IMR-90 (cell line): ENCODE measurements at regions of chr9 and their contacts with region 1.

Region 1: DNA sequence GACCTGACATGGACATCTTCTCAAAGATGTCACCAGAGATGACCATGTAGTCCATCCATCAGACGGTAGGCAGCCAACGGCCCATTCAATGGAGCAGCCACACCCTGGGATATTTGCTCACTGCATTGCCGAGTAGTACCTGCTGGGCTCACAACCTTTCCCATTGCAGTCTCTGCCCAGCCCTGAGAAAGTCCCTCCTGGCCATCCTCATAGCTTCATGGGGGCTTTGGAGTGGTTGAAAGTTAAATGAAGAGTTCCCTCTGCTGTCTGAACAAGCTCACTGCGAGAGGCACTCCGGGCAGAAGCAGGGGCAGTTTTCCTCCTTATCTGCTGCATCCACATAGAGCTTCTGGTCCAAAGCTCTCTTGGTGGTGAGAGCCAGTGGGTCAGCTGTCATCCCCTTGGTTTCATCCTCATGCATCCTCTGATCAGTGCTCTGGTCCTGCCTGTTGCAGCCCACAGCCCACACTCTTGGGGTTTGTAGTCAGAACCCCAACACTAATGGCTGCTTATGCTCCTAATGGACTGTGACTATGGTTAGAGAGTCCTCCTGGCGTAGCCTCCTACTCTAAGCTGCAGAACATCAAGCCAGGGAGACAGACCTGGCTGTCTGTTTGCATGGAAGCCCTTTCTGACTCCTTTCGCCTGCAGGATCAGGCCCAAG is 23.4 kb downstream of the TNFSF8 start:
- DNase-seq: peak; percentile 61
- ATAC-seq: peak; percentile 76
- H3K4me3 ChIP-seq: no peak overlapping the region
- H3K27ac ChIP-seq: no peak overlapping the region
- H3K4me1 ChIP-seq: peaks cover 20% of the 10 kb centered on the region
- H3K27me3 ChIP-seq: no peaks in the 10 kb centered on the region; the same call in 1 of the 2 replicates
- CTCF ChIP-seq: peak; percentile 87
- POLR2A ChIP-seq: no peak
- RAD21 ChIP-seq: peak; percentile 89

Region 2: DNA sequence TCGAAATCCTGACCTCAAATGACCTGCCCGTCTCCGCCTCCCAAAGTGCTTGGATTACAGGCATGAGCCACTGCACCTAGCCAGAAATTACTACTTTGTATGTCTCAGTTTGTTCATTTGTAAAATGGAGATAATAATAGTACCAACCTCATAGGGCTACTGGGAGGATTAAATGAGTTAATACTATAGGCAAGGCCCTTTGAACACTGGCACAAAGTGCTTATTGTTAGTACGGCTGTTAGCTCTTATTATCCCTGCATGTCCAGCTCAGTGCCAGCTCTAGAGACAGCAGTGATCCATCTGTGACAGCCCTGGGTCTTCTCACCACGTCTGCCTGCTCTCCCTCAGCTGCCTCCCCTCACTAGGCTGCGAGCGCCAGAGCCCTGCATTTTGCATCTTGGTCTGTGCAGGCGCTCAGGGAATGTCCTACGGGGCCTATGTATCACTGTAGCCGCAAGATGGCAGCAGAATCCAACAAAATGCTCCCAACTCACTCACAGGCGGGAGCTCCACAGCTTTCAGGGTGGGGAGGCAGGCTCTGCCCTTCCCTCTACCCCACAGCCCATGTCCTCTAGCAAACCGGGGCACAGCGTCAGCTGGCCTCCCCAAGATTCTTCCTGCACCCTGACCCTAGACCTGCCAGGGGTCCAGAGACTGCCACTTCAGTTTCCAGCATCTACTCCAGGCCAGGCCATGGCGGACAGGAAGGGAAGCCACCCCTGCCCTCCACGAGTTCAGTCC is 501.6 kb before region 1 on chr9:
- CTCF ChIA-PET with region 1: interaction called, 4 read pairs
- POLR2A ChIA-PET with region 1: no interaction called
- dilution Hi-C with region 1: no loop called
- in situ Hi-C with region 1: loop called (anchors 10 kb)
- intact Hi-C with region 1: loop called (anchors 10 kb)
- DNase-seq: peak; percentile 78
- ATAC-seq: peak; percentile 99
- H3K4me3 ChIP-seq: no peak overlapping the region
- H3K27ac ChIP-seq: no peak overlapping the region
- H3K4me1 ChIP-seq: no peaks in the 10 kb centered on the region
- H3K27me3 ChIP-seq: peaks cover 5% of the 10 kb centered on the region; the same call in 1 of the 2 replicates
- CTCF ChIP-seq: peak; percentile 93
- POLR2A ChIP-seq: no peak
- RAD21 ChIP-seq: peak; percentile 95

Region 3: DNA sequence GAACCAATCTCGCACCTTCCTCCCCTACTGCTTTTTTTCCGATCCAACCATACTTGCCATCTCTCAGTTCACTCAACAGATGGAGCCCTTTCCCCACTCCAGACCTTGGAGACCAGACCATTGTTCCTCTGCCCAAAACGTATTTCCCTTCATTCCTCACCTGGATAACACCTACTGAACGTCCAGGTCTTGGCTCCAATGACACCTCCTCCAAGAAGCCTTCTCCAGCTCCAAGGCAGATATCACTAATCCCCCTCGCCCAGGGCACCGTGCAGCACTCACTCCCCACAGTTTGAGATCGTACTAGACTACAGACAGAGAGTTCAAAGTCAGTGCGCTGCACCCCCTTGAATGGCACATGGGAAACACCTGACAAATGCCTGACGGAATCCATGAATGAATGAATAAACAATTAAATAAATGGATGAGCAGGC is 472.1 kb before region 1 on chr9:
- CTCF ChIA-PET with region 1: no interaction called
- POLR2A ChIA-PET with region 1: no interaction called
- dilution Hi-C with region 1: no loop called
- in situ Hi-C with region 1: no loop called
- intact Hi-C with region 1: loop called (anchors 10 kb)
- DNase-seq: peak; percentile 37
- ATAC-seq: peak; percentile 91
- H3K4me3 ChIP-seq: no peak overlapping the region
- H3K27ac ChIP-seq: no peak overlapping the region
- H3K4me1 ChIP-seq: no peaks in the 10 kb centered on the region
- H3K27me3 ChIP-seq: peaks cover 13% of the 10 kb centered on the region
- CTCF ChIP-seq: peak; percentile 69
- POLR2A ChIP-seq: no peak
- RAD21 ChIP-seq: peak; percentile 79

Region 4: GRCh38 chr9:114662081-114662989 is 244.7 kb before region 1 on chr9:
- CTCF ChIA-PET with region 1: interaction called, 5 read pairs
- POLR2A ChIA-PET with region 1: no interaction called
- dilution Hi-C with region 1: no loop called
- in situ Hi-C with region 1: no loop called
- intact Hi-C with region 1: loop called (anchors 2 kb)
- DNase-seq: peak; percentile 33
- ATAC-seq: peak; percentile 98
- H3K4me3 ChIP-seq: no peak overlapping the region
- H3K27ac ChIP-seq: no peak overlapping the region
- H3K4me1 ChIP-seq: no peaks in the 10 kb centered on the region
- H3K27me3 ChIP-seq: peaks cover 30% of the 10 kb centered on the region
- CTCF ChIP-seq: peak; percentile 84
- POLR2A ChIP-seq: no peak
- RAD21 ChIP-seq: peak; percentile 92

Region 5: DNA sequence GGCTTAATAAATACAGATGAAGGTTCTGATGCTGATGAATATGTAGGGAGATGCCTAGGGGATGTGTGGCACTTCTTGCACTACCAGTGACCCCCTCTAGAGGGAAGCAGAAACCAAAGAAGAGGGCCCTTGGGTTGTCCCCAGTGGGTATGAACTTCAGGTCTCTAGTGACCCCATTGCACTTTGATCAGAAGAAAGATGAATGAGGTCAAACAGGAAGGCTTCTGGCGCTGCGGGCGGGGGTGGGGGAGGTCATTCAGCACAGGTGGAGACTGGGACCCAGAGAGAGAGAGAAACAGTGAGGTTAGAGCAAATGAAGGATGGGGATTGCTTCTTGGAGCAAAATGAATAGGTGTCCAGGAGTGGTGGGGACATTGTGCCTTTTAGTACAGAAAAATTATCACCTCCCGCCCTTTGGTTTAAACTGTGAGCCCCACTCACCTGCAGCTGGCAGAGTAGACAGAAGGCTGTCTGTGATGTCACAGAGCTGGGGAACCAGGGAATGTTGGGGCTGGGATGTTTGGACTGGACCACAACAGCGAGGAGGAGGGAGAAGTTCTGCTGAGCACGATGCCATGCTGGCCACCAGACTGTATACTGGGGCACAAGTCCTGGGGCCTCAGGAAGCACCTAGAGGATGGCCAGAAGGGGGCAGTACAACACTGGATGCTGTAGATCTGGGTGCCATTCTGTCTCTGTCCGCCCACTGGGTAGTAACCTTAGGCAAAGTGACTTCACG is 225.3 kb before region 1 on chr9 and contains the start of gene TEX48:
- CTCF ChIA-PET with region 1: interaction called, 19 read pairs
- POLR2A ChIA-PET with region 1: no interaction called
- dilution Hi-C with region 1: no loop called
- in situ Hi-C with region 1: loop called (anchors 5 kb)
- intact Hi-C with region 1: loop called (anchors 1 kb)
- DNase-seq: peak; percentile 74
- ATAC-seq: peak; percentile 58
- H3K4me3 ChIP-seq: no peak within 1 kb of the TSS
- H3K27ac ChIP-seq: no peak within 1 kb of the TSS
- H3K4me1 ChIP-seq: peaks cover 9% of the 10 kb centered on the region
- H3K27me3 ChIP-seq: no peaks in the 10 kb centered on the region
- CTCF ChIP-seq: peak; percentile 70
- POLR2A ChIP-seq: no peak
- RAD21 ChIP-seq: peak; percentile 75
- total RNA-seq, gene TEX48: not detected in 2 replicates

Region 6: DNA sequence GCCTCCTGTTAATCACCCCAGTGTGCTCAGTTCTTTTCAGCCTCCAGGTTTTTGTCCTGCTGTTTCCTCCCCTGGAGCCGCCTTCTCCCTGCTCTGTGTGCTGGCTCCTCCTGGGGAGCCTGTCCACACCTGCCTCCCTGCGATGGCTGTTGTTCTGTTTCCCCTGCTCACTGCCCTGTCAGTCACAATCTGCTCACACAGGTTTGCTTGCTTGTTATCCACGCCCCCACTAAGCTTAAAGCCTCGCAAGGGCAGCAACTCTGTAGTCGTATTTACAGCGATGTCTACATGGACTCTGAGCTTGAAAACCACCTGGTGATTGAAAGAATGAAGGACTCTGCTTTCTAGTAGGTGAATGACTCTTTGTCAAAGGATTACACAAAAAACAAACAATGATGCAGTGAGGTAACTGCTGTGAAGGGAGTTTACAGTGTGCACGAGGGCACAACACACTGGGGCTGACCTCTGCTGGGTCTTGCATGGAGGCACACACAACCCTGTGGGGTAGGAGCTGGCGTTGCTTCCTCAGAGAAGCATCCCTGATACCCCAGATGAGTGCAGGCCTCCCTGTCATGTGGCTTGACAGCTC is 185.5 kb before region 1 on chr9:
- CTCF ChIA-PET with region 1: no interaction called
- POLR2A ChIA-PET with region 1: no interaction called
- dilution Hi-C with region 1: no loop called
- in situ Hi-C with region 1: no loop called
- intact Hi-C with region 1: no loop called
- DNase-seq: no peak
- ATAC-seq: no peak
- H3K4me3 ChIP-seq: no peak overlapping the region
- H3K27ac ChIP-seq: no peak overlapping the region
- H3K4me1 ChIP-seq: peaks cover 19% of the 10 kb centered on the region
- H3K27me3 ChIP-seq: peaks cover 42% of the 10 kb centered on the region
- CTCF ChIP-seq: no peak
- POLR2A ChIP-seq: no peak
- RAD21 ChIP-seq: no peak

Region 7: GRCh38 chr9:114988962-114989599 is 82.0 kb after region 1 on chr9:
- CTCF ChIA-PET with region 1: no interaction called
- POLR2A ChIA-PET with region 1: no interaction called
- dilution Hi-C with region 1: no loop called
- in situ Hi-C with region 1: no loop called
- intact Hi-C with region 1: no loop called
- DNase-seq: no peak
- ATAC-seq: no peak
- H3K4me3 ChIP-seq: no peak overlapping the region
- H3K27ac ChIP-seq: no peak overlapping the region
- H3K4me1 ChIP-seq: no peaks in the 10 kb centered on the region
- H3K27me3 ChIP-seq: peaks cover 56% of the 10 kb centered on the region
- CTCF ChIP-seq: no peak
- POLR2A ChIP-seq: no peak
- RAD21 ChIP-seq: no peak